AG04450 (cell line): ENCODE measurements at regions of chr21 and their contacts with region 1.

Region 1: GRCh38 chr21:42117229-42117966 is 46.3 kb downstream of the UMODL1 start:
- DNase-seq: peak; percentile 47
- H3K4me3 ChIP-seq: peak overlapping the region; percentile 31
- H3K27ac ChIP-seq: no peak overlapping the region
- H3K27me3 ChIP-seq: peaks cover 38% of the 10 kb centered on the region
- CTCF ChIP-seq: peak; percentile 92

Region 2: GRCh38 chr21:41877901-41878830 is 239.2 kb before region 1 on chr21:
- CTCF ChIA-PET with region 1: interaction called, 10 read pairs
- POLR2A ChIA-PET with region 1: no interaction called
- DNase-seq: no peak
- H3K4me3 ChIP-seq: peak overlapping the region; percentile 83
- H3K27ac ChIP-seq: peak overlapping the region; percentile 57
- H3K27me3 ChIP-seq: no peaks in the 10 kb centered on the region
- CTCF ChIP-seq: no peak

Region 3: DNA sequence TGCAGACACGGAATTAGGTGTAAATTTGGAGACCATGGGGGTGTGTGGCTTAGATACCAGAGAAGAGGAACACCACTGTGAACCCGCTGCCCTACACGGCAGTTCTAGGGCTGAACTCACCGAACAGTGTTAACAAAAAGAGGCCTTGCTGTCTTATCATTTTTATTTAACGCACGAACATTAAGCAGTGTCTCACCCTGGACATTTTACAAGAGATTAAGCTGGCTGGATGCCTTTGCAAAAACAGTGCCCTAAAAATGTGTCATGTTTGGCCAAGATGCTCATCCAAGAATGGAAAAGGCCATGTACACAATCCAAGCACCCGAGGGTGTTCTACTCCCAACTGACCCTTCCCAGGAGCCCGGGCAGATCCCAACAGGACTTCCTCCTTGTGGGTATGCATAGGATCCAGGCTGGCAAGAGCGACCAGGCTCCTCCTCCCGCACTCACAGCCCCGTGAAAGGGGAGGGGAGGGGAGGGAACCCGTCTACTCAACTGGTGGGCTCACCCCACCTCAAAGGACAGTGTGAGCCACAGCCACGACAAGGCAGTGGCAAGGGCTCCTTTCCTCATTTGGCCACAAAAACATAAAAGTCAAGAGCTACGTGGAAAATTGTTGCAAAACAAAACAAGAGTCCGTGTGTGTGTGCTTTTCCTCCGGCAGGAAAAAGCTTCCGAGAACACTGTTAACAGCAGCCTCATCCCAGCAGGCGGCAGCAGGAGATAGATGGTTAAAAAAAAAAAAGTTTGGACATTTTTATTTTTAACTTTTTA is 183.9 kb before region 1 on chr21:
- CTCF ChIA-PET with region 1: interaction called, 15 read pairs
- POLR2A ChIA-PET with region 1: no interaction called
- DNase-seq: no peak
- H3K4me3 ChIP-seq: peak overlapping the region; percentile 46
- H3K27ac ChIP-seq: peak overlapping the region; percentile 31
- H3K27me3 ChIP-seq: no peaks in the 10 kb centered on the region
- CTCF ChIP-seq: peak; percentile 69

Region 4: GRCh38 chr21:41957991-41958766 is 159.2 kb before region 1 on chr21:
- CTCF ChIA-PET with region 1: interaction called, 10 read pairs
- POLR2A ChIA-PET with region 1: interaction called, 3 read pairs
- DNase-seq: peak; percentile 91
- H3K4me3 ChIP-seq: no peak overlapping the region
- H3K27ac ChIP-seq: peak overlapping the region; percentile 94
- H3K27me3 ChIP-seq: no peaks in the 10 kb centered on the region
- CTCF ChIP-seq: peak; percentile 53

Region 5: GRCh38 chr21:42004406-42005199 is 112.8 kb before region 1 on chr21:
- CTCF ChIA-PET with region 1: interaction called, 12 read pairs
- POLR2A ChIA-PET with region 1: interaction called, 3 read pairs
- DNase-seq: no peak
- H3K4me3 ChIP-seq: no peak overlapping the region
- H3K27ac ChIP-seq: no peak overlapping the region
- H3K27me3 ChIP-seq: no peaks in the 10 kb centered on the region
- CTCF ChIP-seq: no peak

Region 6: DNA sequence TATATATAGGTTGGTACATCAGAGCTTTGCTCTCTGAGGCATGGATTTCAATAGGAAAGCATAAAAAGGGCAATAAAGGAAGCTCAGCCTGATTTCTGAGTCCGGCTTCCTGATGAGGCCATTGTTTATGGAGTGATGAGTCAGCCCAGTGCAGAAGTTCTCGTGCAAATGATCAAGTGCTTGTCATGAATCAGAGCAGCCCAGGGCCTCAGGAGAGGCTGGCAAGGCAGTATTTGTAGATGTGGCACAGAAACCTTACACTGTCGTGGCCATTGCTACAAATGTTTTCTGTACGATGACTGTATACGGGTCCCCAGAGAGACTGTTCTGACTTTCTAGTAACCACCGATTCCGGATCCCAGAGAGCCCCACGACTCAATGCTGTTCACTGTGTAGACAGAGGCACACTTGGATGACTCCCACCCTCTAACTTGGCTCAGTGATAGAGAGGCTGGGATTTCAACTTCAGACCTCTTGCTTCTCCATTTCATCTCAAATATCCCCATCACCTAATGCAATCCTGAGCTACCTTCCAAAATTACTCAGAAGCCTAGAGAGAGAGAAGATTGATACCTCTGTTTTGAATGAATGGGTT is 19.4 kb before region 1 on chr21:
- CTCF ChIA-PET with region 1: interaction called, 25 read pairs
- POLR2A ChIA-PET with region 1: no interaction called
- DNase-seq: peak; percentile 96
- H3K4me3 ChIP-seq: no peak overlapping the region
- H3K27ac ChIP-seq: peak overlapping the region; percentile 99
- H3K27me3 ChIP-seq: no peaks in the 10 kb centered on the region
- CTCF ChIP-seq: no peak

Region 7: GRCh38 chr21:42921927-42922326 is 804.5 kb after region 1 on chr21:
- CTCF ChIA-PET with region 1: interaction called, 11 read pairs
- POLR2A ChIA-PET with region 1: no interaction called
- DNase-seq: no peak
- H3K4me3 ChIP-seq: no peak overlapping the region
- H3K27ac ChIP-seq: no peak overlapping the region
- H3K27me3 ChIP-seq: peaks cover 4% of the 10 kb centered on the region
- CTCF ChIP-seq: no peak